MCF 10A (cell line): ENCODE measurements at regions of chr13 and their contacts with region 1.

Region 1: DNA sequence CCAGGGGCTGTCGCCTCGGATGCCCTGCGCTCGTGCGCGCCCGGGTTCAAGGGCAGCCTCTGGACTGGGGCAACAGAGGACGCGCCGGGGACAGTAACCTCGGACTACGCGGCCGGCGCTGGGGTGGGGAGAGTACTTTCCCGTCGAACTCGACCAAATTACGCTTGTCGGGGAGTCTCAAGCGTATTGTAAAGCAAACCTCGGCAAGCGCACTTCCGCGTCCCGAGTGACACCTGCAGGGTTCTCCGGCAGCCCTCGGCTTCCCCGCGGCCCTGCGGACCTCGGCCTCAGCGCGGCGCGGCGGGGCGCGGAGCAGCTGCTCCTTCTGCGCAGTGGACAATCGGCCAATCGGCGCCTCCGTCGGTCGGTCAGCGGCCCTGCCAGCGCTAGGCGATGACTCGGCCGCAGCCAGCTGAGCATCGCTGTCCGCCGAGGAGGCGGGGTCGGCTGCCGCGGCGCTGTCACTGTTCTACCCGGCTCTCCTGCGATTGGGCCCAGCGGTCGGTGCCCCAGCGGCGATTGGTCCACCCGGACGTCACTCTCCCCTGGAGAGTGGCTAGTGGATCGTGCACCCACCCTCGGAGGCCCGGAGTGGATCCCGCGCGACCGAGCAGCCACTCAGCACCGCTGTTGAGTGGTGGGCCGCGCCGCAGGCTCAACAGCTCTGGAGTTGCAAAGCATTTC is at the start of gene SLC46A3:
- DNase-seq: peak; percentile 96
- H3K4me3 Mint-ChIP-seq: peak within 1 kb of the TSS; percentile 81
- H3K27ac Mint-ChIP-seq: peak within 1 kb of the TSS; percentile 93
- H3K4me1 Mint-ChIP-seq: peaks cover 33% of the 10 kb centered on the region
- H3K27me3 Mint-ChIP-seq: no peaks in the 10 kb centered on the region
- CTCF ChIP-seq: no peak
- total RNA-seq, gene SLC46A3: 6.4 and 8.1 TPM in 2 replicates

Region 2: GRCh38 chr13:28574617-28575142 is 144.0 kb before region 1 on chr13:
- CTCF ChIA-PET with region 1: no interaction called
- POLR2A ChIA-PET with region 1: no interaction called
- intact Hi-C with region 1: no loop called
- DNase-seq: peak; percentile 93
- H3K4me3 Mint-ChIP-seq: no peak overlapping the region
- H3K27ac Mint-ChIP-seq: peak overlapping the region; percentile 46
- H3K4me1 Mint-ChIP-seq: peaks cover 6% of the 10 kb centered on the region
- H3K27me3 Mint-ChIP-seq: no peaks in the 10 kb centered on the region
- CTCF ChIP-seq: no peak

Region 3: DNA sequence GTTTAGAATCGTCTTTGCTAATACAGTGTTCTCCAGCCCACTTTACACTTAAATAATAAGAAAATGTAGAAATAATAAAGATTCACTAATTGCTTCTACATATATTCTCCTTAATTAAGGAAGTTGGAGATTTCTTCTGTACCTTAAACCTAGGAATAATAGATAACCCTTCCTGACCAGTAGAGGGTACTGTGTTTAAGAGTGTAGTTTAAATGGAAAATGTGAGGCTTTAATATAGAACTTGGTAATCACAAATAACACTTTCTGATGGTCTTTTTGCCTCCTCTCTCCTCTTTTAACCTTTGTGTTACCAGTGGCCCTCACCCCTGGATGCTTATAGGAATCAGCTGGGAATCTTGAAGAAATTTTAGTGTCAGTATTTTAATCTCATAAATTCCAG is 39.1 kb before region 1 on chr13:
- CTCF ChIA-PET with region 1: no interaction called
- POLR2A ChIA-PET with region 1: interaction called, 5 read pairs
- intact Hi-C with region 1: loop called (anchors 5 kb)
- DNase-seq: peak; percentile 27
- H3K4me3 Mint-ChIP-seq: no peak overlapping the region
- H3K27ac Mint-ChIP-seq: no peak overlapping the region
- H3K4me1 Mint-ChIP-seq: no peaks in the 10 kb centered on the region
- H3K27me3 Mint-ChIP-seq: no peaks in the 10 kb centered on the region
- CTCF ChIP-seq: peak; percentile 30

Region 4: GRCh38 chr13:28753243-28753887 is 34.7 kb after region 1 on chr13:
- CTCF ChIA-PET with region 1: interaction called, 4 read pairs
- POLR2A ChIA-PET with region 1: interaction called, 3 read pairs
- intact Hi-C with region 1: loop called (anchors 1 kb)
- DNase-seq: peak; percentile 93
- H3K4me3 Mint-ChIP-seq: peak overlapping the region; percentile 21
- H3K27ac Mint-ChIP-seq: peak overlapping the region; percentile 91
- H3K4me1 Mint-ChIP-seq: peaks cover 15% of the 10 kb centered on the region
- H3K27me3 Mint-ChIP-seq: no peaks in the 10 kb centered on the region
- CTCF ChIP-seq: no peak

Region 5: GRCh38 chr13:28889086-28889732 is 170.5 kb after region 1 on chr13:
- CTCF ChIA-PET with region 1: no interaction called
- POLR2A ChIA-PET with region 1: no interaction called
- intact Hi-C with region 1: no loop called
- DNase-seq: no peak
- H3K4me3 Mint-ChIP-seq: no peak overlapping the region
- H3K27ac Mint-ChIP-seq: no peak overlapping the region
- H3K4me1 Mint-ChIP-seq: no peaks in the 10 kb centered on the region
- H3K27me3 Mint-ChIP-seq: no peaks in the 10 kb centered on the region
- CTCF ChIP-seq: no peak